CD8-positive, alpha-beta T cell (primary cell): ENCODE measurements at regions of chr13 and their contacts with region 1.

Region 1: GRCh38 chr13:74270018-74270417 is 135.8 kb upstream of the KLF12 start:
- DNase-seq: no peak
- ATAC-seq: no peak
- H3K4me3 ChIP-seq: no peak overlapping the region
- H3K4me3 Mint-ChIP-seq: no peak overlapping the region
- H3K27ac ChIP-seq: no peak overlapping the region
- H3K27ac Mint-ChIP-seq: no peak overlapping the region
- H3K4me1 ChIP-seq: peaks cover 4% of the 10 kb centered on the region
- H3K4me1 Mint-ChIP-seq: peaks cover 34% of the 10 kb centered on the region
- H3K27me3 ChIP-seq: no peaks in the 10 kb centered on the region
- H3K27me3 Mint-ChIP-seq: no peaks in the 10 kb centered on the region
- CTCF ChIP-seq: no peak

Region 2: GRCh38 chr13:73268306-73268705 is 1001.7 kb before region 1 on chr13:
- CTCF ChIA-PET with region 1: no interaction called
- POLR2A ChIA-PET with region 1: no interaction called
- intact Hi-C with region 1: no loop called
- DNase-seq: no peak
- ATAC-seq: no peak
- H3K4me3 ChIP-seq: no peak overlapping the region
- H3K4me3 Mint-ChIP-seq: no peak overlapping the region
- H3K27ac ChIP-seq: no peak overlapping the region
- H3K27ac Mint-ChIP-seq: no peak overlapping the region
- H3K4me1 ChIP-seq: no peaks in the 10 kb centered on the region
- H3K4me1 Mint-ChIP-seq: no peaks in the 10 kb centered on the region
- H3K27me3 ChIP-seq: no peaks in the 10 kb centered on the region
- H3K27me3 Mint-ChIP-seq: no peaks in the 10 kb centered on the region
- CTCF ChIP-seq: no peak

Region 3: GRCh38 chr13:74226791-74227475 is 43.1 kb before region 1 on chr13:
- CTCF ChIA-PET with region 1: no interaction called
- POLR2A ChIA-PET with region 1: interaction called, 4 read pairs
- intact Hi-C with region 1: loop called in 1 of 2 experiments (anchors 5 kb)
- DNase-seq: no peak
- ATAC-seq: no peak
- H3K4me3 ChIP-seq: no peak overlapping the region
- H3K4me3 Mint-ChIP-seq: no peak overlapping the region
- H3K27ac ChIP-seq: no peak overlapping the region
- H3K27ac Mint-ChIP-seq: no peak overlapping the region
- H3K4me1 ChIP-seq: peaks cover 13% of the 10 kb centered on the region
- H3K4me1 Mint-ChIP-seq: peaks cover 24% of the 10 kb centered on the region
- H3K27me3 ChIP-seq: no peaks in the 10 kb centered on the region
- H3K27me3 Mint-ChIP-seq: no peaks in the 10 kb centered on the region
- CTCF ChIP-seq: no peak

Region 4: GRCh38 chr13:74251778-74252519 is 18.1 kb before region 1 on chr13:
- CTCF ChIA-PET with region 1: interaction called, 3 read pairs
- POLR2A ChIA-PET with region 1: interaction called, 4 read pairs
- intact Hi-C with region 1: loop called in 1 of 2 experiments (anchors 2 kb)
- DNase-seq: peak in 2 of 9 experiments; percentile 23 to 33
- ATAC-seq: no peak
- H3K4me3 ChIP-seq: no peak overlapping the region
- H3K4me3 Mint-ChIP-seq: peak overlapping the region; percentile 44
- H3K27ac ChIP-seq: peak overlapping the region in 1 of 2 experiments; percentile 41
- H3K27ac Mint-ChIP-seq: peak overlapping the region; percentile 88
- H3K4me1 ChIP-seq: peaks cover 69% of the 10 kb centered on the region
- H3K4me1 Mint-ChIP-seq: peaks cover 89% of the 10 kb centered on the region
- H3K27me3 ChIP-seq: no peaks in the 10 kb centered on the region
- H3K27me3 Mint-ChIP-seq: no peaks in the 10 kb centered on the region
- CTCF ChIP-seq: no peak